K562 (cell line): ENCODE measurements at regions of chr2 and their contacts with region 1.

Region 1: DNA sequence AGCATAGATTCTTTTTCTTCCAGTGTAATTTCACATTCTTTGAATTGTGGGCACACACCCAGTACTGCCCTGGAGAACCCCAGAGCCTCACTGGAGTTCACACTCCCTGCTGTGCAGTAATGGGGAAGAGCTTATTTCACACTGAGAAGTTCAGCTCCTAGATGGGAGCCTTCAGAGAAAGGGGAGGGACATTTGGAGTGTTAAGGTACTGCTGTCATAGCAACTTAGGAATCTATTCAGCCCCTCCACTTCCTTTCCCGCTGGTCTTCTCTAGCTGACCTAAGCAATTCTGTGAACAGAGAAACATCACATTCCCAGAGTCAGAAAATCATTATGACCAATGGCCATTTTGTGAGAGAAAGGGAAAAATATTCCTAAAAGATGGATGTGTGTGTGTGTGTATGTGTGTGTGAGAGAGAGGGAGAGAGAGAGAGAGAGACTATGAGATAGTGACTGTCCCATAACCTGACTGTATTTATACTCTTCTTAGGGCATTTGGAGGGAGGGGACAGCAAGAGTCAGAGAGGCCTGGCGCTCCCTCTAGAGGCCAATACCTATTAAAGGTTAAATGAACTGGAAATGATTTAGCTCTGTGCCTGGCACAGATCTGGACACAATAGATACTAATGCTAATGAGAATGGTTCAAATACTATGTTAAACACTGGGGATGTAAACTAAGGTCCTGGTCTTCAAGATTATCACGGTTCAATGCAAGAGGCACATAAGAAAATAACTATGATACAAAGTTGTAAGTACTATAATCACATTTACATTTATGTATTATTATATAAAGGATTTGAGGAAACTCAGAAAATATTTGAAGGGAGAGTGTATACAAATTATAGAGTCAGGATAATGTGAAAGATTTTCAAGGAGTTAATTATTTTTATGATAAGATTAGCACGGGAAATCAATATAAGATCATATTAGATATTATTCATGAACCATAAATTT is 41.5 kb upstream of the RPE start:
- DNase-seq: peak; percentile 18 to 61 (median 28)
- ATAC-seq: peak; percentile 88
- H3K4me3 ChIP-seq: no peak overlapping the region
- H3K27ac ChIP-seq: no peak overlapping the region
- H3K4me1 ChIP-seq: no peaks in the 10 kb centered on the region
- H3K27me3 ChIP-seq: no peaks in the 10 kb centered on the region
- CTCF ChIP-seq: peak; percentile 51 to 66 (median 60)
- EP300 ChIP-seq: no peak
- POLR2A ChIP-seq: no peak
- RAD21 ChIP-seq: peak; percentile 22 to 60; a peak in 3 of 4 replicates

Region 2: GRCh38 chr2:208399202-208399601 is 1561.8 kb before region 1 on chr2:
- CTCF ChIA-PET with region 1: no interaction called
- POLR2A ChIA-PET with region 1: no interaction called
- in situ Hi-C with region 1: loop called (anchors 10 kb)
- intact Hi-C with region 1: loop called (anchors 5 kb)
- DNase-seq: no peak
- ATAC-seq: no peak
- H3K4me3 ChIP-seq: no peak overlapping the region
- H3K27ac ChIP-seq: no peak overlapping the region
- H3K4me1 ChIP-seq: no peaks in the 10 kb centered on the region
- H3K27me3 ChIP-seq: no peaks in the 10 kb centered on the region
- CTCF ChIP-seq: no peak
- EP300 ChIP-seq: no peak
- POLR2A ChIP-seq: no peak
- RAD21 ChIP-seq: no peak

Region 3: GRCh38 chr2:208407667-208408066 is 1553.3 kb before region 1 on chr2:
- CTCF ChIA-PET with region 1: no interaction called
- POLR2A ChIA-PET with region 1: no interaction called
- in situ Hi-C with region 1: loop called (anchors 10 kb)
- intact Hi-C with region 1: no loop called
- DNase-seq: peak; percentile 27 to 34 (median 32)
- ATAC-seq: peak; percentile 86
- H3K4me3 ChIP-seq: no peak overlapping the region
- H3K27ac ChIP-seq: no peak overlapping the region
- H3K4me1 ChIP-seq: peaks cover 0 to 9% of the 10 kb centered on the region in 2 experiments; a peak in 2 of 5 replicates
- H3K27me3 ChIP-seq: peaks cover 2 to 12% of the 10 kb centered on the region in 2 experiments; a peak in 3 of 5 replicates
- CTCF ChIP-seq: peak; percentile 48 to 75 (median 52); a peak in 4 of 6 replicates
- EP300 ChIP-seq: no peak
- POLR2A ChIP-seq: no peak
- RAD21 ChIP-seq: peak; percentile 78 to 81

Region 4: GRCh38 chr2:209334198-209335017 is 626.5 kb before region 1 on chr2:
- CTCF ChIA-PET with region 1: no interaction called
- POLR2A ChIA-PET with region 1: no interaction called
- in situ Hi-C with region 1: no loop called
- intact Hi-C with region 1: loop called (anchors 5 kb)
- DNase-seq: peak; percentile 9 to 41 (median 21)
- ATAC-seq: 0 out of 3 replicates have a peak, but pooled peaks have one; percentile 42
- H3K4me3 ChIP-seq: no peak overlapping the region
- H3K27ac ChIP-seq: no peak overlapping the region
- H3K4me1 ChIP-seq: no peaks in the 10 kb centered on the region
- H3K27me3 ChIP-seq: no peaks in the 10 kb centered on the region
- CTCF ChIP-seq: peak; percentile 47 to 52 (median 51); a peak in 4 of 6 replicates
- EP300 ChIP-seq: no peak
- POLR2A ChIP-seq: no peak
- RAD21 ChIP-seq: peak; percentile 41 to 50

Region 5: DNA sequence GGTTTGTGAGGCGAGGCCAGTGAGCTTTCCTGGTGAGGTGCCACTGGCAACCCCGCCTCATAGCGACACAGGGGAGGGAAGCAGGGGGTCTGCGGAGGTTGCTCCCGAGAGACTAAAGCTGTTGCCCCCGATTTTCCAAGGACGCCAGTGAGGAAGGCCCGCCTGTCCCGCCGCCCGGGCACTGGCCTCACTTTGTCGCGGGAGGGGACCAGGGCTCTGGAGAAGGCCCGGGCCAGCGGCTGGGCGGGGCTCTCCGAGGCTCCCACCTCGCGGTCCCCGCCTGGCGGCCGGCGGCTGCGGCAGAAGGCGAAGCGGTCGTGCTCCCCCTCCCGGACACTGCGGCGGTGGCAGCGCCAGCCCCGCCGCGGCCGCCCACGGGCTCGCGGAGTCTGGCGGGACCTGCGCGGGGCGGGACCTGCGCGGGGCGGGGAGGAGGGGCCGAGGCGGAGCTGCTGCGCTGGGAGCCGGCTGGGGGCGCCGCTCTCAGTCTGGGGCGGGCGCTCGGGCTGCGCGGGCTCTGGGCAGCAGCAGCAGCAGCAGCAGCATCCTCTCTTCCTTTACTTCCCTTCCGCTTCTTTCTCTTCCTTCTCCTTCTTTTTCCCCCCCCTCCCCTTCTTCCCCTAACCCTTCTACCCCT is 537.3 kb before region 1 on chr2 and contains the start of gene MAP2:
- CTCF ChIA-PET with region 1: no interaction called
- POLR2A ChIA-PET with region 1: no interaction called
- in situ Hi-C with region 1: no loop called
- intact Hi-C with region 1: loop called (anchors 10 kb)
- DNase-seq: peak; percentile 58 to 71 (median 64)
- ATAC-seq: peak; percentile 100
- H3K4me3 ChIP-seq: peak within 1 kb of the TSS; percentile 30
- H3K27ac ChIP-seq: no peak within 1 kb of the TSS
- H3K4me1 ChIP-seq: peaks cover 0 to 11% of the 10 kb centered on the region in 2 experiments; a peak in 2 of 5 replicates
- H3K27me3 ChIP-seq: no peaks in the 10 kb centered on the region
- CTCF ChIP-seq: peak; percentile 38 to 99 (median 91); a peak in 5 of 6 replicates
- EP300 ChIP-seq: no peak
- POLR2A ChIP-seq: no peak
- RAD21 ChIP-seq: peak in 1 of 2 experiments; percentile 56; a peak in 3 of 4 replicates
- polyA plus RNA-seq, gene MAP2: not detected